ENCODE measurements at regions of chr5 and their contacts with region 1.

Region 1: DNA sequence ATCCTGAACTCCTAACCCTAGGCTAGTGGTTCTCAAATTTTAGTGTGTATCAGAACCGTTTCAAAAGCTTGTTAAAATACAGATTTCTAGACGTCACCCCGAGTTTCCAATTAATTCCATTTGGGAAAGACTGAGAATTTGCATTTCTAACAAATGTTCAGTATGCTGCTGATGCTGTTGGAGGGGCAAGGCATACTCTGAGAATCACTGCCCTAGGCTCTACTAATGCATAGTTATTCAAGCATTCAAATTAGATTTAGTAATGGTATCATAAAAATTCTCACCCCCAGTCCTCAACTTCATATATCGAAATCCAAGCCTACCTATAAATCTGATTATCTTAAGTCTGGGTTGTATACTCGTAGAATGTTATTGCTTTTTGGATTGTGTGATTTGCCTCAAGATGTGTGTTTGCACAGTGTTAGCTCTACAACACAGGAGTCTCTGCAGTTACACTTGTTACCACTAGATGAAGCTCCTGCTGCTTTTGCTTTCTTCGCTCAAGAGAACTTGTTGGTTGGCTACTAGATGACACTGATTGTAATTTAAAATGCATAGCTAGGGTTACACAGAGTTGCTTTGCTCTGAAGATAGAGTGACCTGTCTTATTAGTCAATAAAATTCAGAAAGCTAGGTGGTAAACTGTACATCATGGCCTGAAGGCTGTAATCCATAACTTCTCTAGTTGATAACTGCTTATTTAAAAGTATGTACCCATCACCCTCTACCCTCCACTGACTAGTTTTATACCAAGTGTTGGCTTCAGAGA is 7.5 kb upstream of the ERAP2 start:
- DNase-seq: peak in 7 of 9 donors; percentile 45 to 75 (median 58)
- ATAC-seq: peak; percentile 97
- H3K4me3 ChIP-seq: no peak overlapping the region
- H3K4me3 Mint-ChIP-seq: peak overlapping the region in 3 of 10 donors; percentile 1 to 63 (median 29)
- H3K27ac ChIP-seq: no peak overlapping the region
- H3K27ac Mint-ChIP-seq: peak overlapping the region in 6 of 9 donors; percentile 10 to 93 (median 42)
- H3K4me1 ChIP-seq: peaks cover 0 to 40% of the 10 kb centered on the region in 2 donors
- H3K4me1 Mint-ChIP-seq: peaks cover 15 to 49% (median 47%) of the 10 kb centered on the region in 7 donors
- H3K27me3 ChIP-seq: no peaks in the 10 kb centered on the region
- H3K27me3 Mint-ChIP-seq: peaks cover 0 to 4% (median 0%) of the 10 kb centered on the region in 5 donors

Region 2: GRCh38 chr5:95934207-95934804 is 934.5 kb before region 1 on chr5:
- CTCF ChIA-PET with region 1: no interaction called
- POLR2A ChIA-PET with region 1: no interaction called
- intact Hi-C with region 1: no loop called
- DNase-seq: no peak
- ATAC-seq: no peak
- H3K4me3 ChIP-seq: no peak overlapping the region
- H3K4me3 Mint-ChIP-seq: no peak overlapping the region
- H3K27ac ChIP-seq: no peak overlapping the region
- H3K27ac Mint-ChIP-seq: no peak overlapping the region
- H3K4me1 ChIP-seq: no peaks in the 10 kb centered on the region
- H3K4me1 Mint-ChIP-seq: peaks cover 0 to 20% (median 0%) of the 10 kb centered on the region in 7 donors
- H3K27me3 ChIP-seq: no peaks in the 10 kb centered on the region
- H3K27me3 Mint-ChIP-seq: no peaks in the 10 kb centered on the region

Region 3: GRCh38 chr5:96743065-96743768 is 125.6 kb before region 1 on chr5:
- CTCF ChIA-PET with region 1: no interaction called
- POLR2A ChIA-PET with region 1: no interaction called
- intact Hi-C with region 1: no loop called
- DNase-seq: no peak
- ATAC-seq: peak; percentile 65
- H3K4me3 ChIP-seq: no peak overlapping the region
- H3K4me3 Mint-ChIP-seq: no peak overlapping the region
- H3K27ac ChIP-seq: peak overlapping the region; percentile 13
- H3K27ac Mint-ChIP-seq: peak overlapping the region in 6 of 9 donors; percentile 6 to 80 (median 54)
- H3K4me1 ChIP-seq: no peaks in the 10 kb centered on the region
- H3K4me1 Mint-ChIP-seq: peaks cover 0 to 21% (median 0%) of the 10 kb centered on the region in 7 donors
- H3K27me3 ChIP-seq: no peaks in the 10 kb centered on the region
- H3K27me3 Mint-ChIP-seq: no peaks in the 10 kb centered on the region

Region 4: GRCh38 chr5:96838201-96839070 is 30.4 kb before region 1 on chr5:
- CTCF ChIA-PET with region 1: interaction called, 10 read pairs
- POLR2A ChIA-PET with region 1: no interaction called
- intact Hi-C with region 1: no loop called
- DNase-seq: no peak
- ATAC-seq: no peak
- H3K4me3 ChIP-seq: no peak overlapping the region
- H3K4me3 Mint-ChIP-seq: no peak overlapping the region
- H3K27ac ChIP-seq: no peak overlapping the region
- H3K27ac Mint-ChIP-seq: no peak overlapping the region
- H3K4me1 ChIP-seq: no peaks in the 10 kb centered on the region
- H3K4me1 Mint-ChIP-seq: peaks cover 0 to 17% (median 9%) of the 10 kb centered on the region in 7 donors
- H3K27me3 ChIP-seq: no peaks in the 10 kb centered on the region
- H3K27me3 Mint-ChIP-seq: peaks cover 0 to 2% (median 0%) of the 10 kb centered on the region in 5 donors

Region 5: DNA sequence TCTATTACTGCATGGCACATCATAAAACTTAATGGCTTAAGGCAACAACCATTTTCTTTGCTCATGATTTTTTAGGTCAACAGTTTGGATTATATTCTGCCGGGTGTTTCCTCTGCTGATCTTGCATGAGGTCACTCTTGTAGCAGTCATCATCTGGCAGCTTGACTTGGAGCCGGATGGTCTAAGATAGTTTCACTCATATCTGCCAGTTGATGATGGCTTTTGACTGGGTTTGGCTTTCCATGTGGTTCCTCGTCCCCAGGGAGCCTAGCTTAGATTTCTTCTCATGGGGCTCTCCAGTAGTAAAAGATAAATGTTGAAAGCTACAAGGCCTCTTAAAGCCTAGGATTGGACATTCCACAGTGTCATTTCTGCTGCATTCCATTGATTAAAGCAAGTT is 94.5 kb after region 1 on chr5:
- CTCF ChIA-PET with region 1: interaction called, 6 read pairs
- POLR2A ChIA-PET with region 1: interaction called, 4 read pairs
- intact Hi-C with region 1: loop called in 1 of 2 experiments (anchors 1 kb)
- DNase-seq: no peak
- ATAC-seq: peak; percentile 39
- H3K4me3 ChIP-seq: peak overlapping the region; percentile 6
- H3K4me3 Mint-ChIP-seq: peak overlapping the region; percentile 71 to 88 (median 82)
- H3K27ac ChIP-seq: peak overlapping the region; percentile 71
- H3K27ac Mint-ChIP-seq: peak overlapping the region; percentile 84 to 98 (median 95)
- H3K4me1 ChIP-seq: peaks cover 29 to 52% of the 10 kb centered on the region in 2 donors
- H3K4me1 Mint-ChIP-seq: peaks cover 31 to 96% (median 90%) of the 10 kb centered on the region in 7 donors
- H3K27me3 ChIP-seq: no peaks in the 10 kb centered on the region
- H3K27me3 Mint-ChIP-seq: no peaks in the 10 kb centered on the region

Region 6: GRCh38 chr5:96997265-96997859 is 128.6 kb after region 1 on chr5:
- CTCF ChIA-PET with region 1: interaction called, 15 read pairs
- POLR2A ChIA-PET with region 1: interaction called, 5 read pairs
- intact Hi-C with region 1: loop called (anchors 1 to 5 kb)
- DNase-seq: peak in 5 of 9 donors; percentile 13 to 49 (median 21)
- ATAC-seq: peak; percentile 81
- H3K4me3 ChIP-seq: no peak overlapping the region
- H3K4me3 Mint-ChIP-seq: no peak overlapping the region
- H3K27ac ChIP-seq: no peak overlapping the region
- H3K27ac Mint-ChIP-seq: peak overlapping the region in 5 of 9 donors; percentile 13 to 75 (median 53)
- H3K4me1 ChIP-seq: no peaks in the 10 kb centered on the region
- H3K4me1 Mint-ChIP-seq: peaks cover 12 to 49% (median 33%) of the 10 kb centered on the region in 7 donors
- H3K27me3 ChIP-seq: no peaks in the 10 kb centered on the region
- H3K27me3 Mint-ChIP-seq: no peaks in the 10 kb centered on the region

Region 7: DNA sequence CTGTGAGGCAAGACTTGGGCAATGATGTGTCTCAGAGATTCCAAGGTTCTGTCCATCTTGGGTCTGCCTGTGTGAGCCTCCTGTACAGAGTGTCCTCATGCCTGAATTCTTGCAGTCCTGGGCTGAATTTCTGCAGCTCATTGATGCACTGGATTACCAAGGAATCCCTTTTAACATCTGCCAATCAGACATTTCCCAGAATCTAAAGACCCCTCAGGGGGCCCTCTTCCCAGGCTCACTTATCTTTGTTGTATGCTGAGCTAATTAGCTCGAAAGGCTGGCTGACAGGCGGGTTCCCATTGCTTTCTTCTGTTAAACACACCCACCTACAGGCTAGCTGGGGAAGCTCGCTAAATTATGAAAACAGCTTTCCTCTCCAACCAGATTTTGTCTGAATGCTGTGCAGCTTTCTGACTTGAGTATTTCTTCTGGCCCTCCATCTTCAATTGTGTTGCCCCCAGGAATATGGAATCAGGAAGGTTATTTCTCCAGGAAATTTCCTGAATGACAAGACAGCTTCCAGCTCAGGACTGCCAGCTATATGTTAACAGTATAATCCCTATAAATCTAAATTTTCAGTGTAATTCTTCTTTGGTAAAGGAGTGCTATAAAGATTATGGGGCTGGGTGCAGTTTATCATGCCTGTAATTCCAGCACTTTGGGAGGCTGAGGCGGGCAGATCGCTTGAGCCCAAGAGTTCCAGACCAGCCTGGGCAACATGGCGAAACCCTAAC is 273.9 kb after region 1 on chr5 and contains the start of gene LIX1:
- CTCF ChIA-PET with region 1: interaction called, 18 read pairs
- POLR2A ChIA-PET with region 1: no interaction called
- intact Hi-C with region 1: loop called (anchors 1 kb)
- DNase-seq: peak in 6 of 9 donors; percentile 5 to 46 (median 35)
- ATAC-seq: peak; percentile 77
- H3K4me3 ChIP-seq: no peak within 1 kb of the TSS
- H3K4me3 Mint-ChIP-seq: no peak within 1 kb of the TSS
- H3K27ac ChIP-seq: no peak within 1 kb of the TSS
- H3K27ac Mint-ChIP-seq: no peak within 1 kb of the TSS
- H3K4me1 ChIP-seq: no peaks in the 10 kb centered on the region
- H3K4me1 Mint-ChIP-seq: peaks cover 0 to 6% (median 0%) of the 10 kb centered on the region in 7 donors
- H3K27me3 ChIP-seq: no peaks in the 10 kb centered on the region
- H3K27me3 Mint-ChIP-seq: peaks cover 6 to 37% (median 13%) of the 10 kb centered on the region in 5 donors
- total RNA-seq, gene LIX1: not detected

Measured in naive thymus-derived CD4-positive, alpha-beta T cell (primary cell).